GM13977 (cell line): ENCODE measurements at regions of chr1 and their contacts with region 1.

Region 1: DNA sequence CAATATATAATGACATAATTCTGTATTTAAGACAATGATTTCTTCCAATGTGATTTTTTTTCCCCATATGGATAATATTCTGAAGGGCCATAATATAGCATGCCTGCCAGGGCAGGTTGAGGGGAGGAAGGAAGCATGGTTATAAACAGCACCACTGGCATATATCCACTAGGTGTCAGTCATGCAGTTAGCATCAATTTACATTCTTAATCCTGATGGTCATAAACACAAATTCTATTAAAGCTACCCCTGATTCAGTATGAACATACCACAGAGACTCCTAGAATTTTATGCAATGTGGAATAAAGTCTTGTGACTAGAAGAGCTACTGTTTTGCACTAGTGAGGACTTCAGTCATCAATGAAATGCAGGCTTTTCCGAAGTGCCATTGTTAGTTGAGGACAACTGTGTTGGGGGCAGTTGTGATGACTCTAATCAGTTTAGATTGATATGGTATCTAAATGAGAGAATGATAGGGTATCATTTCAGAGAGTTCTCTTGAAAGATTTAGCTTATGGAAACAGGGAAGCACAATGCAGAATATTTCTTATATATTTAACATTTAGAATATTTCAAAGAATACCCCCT is 342.7 kb upstream of the NR5A2 start:
- DNase-seq: peak; percentile 31
- CTCF ChIP-seq: peak; percentile 81

Region 2: GRCh38 chr1:200510228-200510623 is 825.4 kb after region 1 on chr1:
- in situ Hi-C with region 1: loop called (anchors 25 kb)
- DNase-seq: peak; percentile 81
- CTCF ChIP-seq: peak; percentile 83